Activated T-helper 1 cell treated with anti-CD3 and anti-CD28 coated beads, Interleukin-12 subunit alpha, Interleukin-12 subunit beta, Interleukin-2, Interleukin-4 antibody, amounts not matched to agents 30 ng/mL and 10 ng/mL and 1 ng/mL, durations not matched to agents 14 hours and 24 hours and 36 hours (primary cell): ENCODE measurements at regions of chr7 and their contacts with region 1.

Region 1: DNA sequence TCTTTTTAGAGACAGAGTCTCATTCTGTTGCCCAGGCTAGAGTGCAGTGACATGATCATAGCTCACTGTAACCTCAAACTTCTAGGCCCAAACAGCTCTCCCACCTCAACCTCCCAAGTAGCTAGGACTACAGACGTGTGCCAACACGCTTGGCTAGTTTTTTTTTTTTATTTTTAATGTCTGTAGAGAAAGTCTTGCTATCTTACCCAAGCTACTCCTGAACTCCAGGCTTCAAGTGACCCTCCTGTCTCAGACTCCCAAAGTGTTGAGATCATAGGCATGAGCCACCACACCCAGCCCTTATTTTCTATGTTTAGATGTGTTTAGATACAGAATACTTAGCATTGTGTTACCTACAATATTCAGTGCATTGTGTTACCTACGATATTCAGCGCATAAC is 46.4 kb downstream of the KMT2E start:
- DNase-seq: no peak
- H3K4me3 Mint-ChIP-seq: no peak overlapping the region
- H3K27ac Mint-ChIP-seq: no peak overlapping the region
- H3K4me1 Mint-ChIP-seq: peaks cover 61% of the 10 kb centered on the region
- H3K27me3 Mint-ChIP-seq: no peaks in the 10 kb centered on the region

Region 2: GRCh38 chr7:105046414-105046813 is 14.0 kb before region 1 on chr7:
- intact Hi-C with region 1: loop called (anchors 2 kb)
- DNase-seq: no peak
- H3K4me3 Mint-ChIP-seq: no peak overlapping the region
- H3K27ac Mint-ChIP-seq: no peak overlapping the region
- H3K4me1 Mint-ChIP-seq: peaks cover 41% of the 10 kb centered on the region
- H3K27me3 Mint-ChIP-seq: no peaks in the 10 kb centered on the region

Region 3: GRCh38 chr7:105084581-105084980 is 24.1 kb after region 1 on chr7:
- intact Hi-C with region 1: no loop called
- DNase-seq: no peak
- H3K4me3 Mint-ChIP-seq: no peak overlapping the region
- H3K27ac Mint-ChIP-seq: no peak overlapping the region
- H3K4me1 Mint-ChIP-seq: peaks cover 22% of the 10 kb centered on the region
- H3K27me3 Mint-ChIP-seq: no peaks in the 10 kb centered on the region

Region 4: DNA sequence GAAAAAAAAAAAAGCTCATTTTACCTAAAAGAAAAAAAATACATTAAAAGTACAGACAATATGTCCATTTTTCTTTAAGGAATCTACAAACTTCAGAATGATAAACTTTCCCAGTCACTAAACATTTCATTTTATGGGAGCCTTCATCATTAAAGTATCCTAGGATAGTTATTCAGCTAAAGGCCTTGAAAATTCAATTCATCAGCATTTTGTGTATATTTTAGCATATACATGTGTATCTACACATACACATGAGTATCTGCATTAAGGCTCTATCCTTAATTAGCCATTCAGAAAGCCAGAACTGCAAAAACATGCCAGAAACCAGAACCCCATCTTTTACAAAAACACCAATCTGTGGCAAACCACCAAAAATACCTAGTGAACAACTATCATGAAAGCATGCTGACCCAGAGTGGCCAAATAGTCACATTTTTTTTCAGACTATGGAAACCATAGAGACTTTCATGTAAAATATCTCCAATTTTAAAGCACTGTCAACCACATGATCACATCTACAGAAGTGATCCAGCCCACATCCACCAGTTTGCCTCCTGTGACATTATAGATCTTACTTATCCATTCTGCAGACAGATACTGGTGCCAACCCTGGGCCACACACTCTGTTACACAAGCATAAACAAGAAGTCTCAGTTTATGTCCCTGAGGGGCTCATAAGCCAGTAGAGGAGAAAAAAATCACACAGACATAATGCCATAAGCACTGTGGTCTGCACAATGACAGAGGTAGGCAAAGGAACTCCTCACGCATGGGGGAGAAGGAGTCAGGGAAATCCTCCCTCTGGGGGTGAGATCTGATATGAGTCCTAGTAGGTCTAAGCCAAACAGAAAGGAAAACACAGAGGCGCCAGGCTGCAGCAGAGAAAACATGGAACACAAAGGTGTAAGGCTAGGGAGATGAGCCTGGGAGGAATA is 249.1 kb after region 1 on chr7:
- intact Hi-C with region 1: no loop called
- DNase-seq: no peak
- H3K4me3 Mint-ChIP-seq: no peak overlapping the region
- H3K27ac Mint-ChIP-seq: peak overlapping the region; percentile 11
- H3K4me1 Mint-ChIP-seq: peaks cover 50% of the 10 kb centered on the region
- H3K27me3 Mint-ChIP-seq: no peaks in the 10 kb centered on the region